GM12878 (cell line): ENCODE measurements at regions of chr12 and their contacts with region 1.

Region 1: DNA sequence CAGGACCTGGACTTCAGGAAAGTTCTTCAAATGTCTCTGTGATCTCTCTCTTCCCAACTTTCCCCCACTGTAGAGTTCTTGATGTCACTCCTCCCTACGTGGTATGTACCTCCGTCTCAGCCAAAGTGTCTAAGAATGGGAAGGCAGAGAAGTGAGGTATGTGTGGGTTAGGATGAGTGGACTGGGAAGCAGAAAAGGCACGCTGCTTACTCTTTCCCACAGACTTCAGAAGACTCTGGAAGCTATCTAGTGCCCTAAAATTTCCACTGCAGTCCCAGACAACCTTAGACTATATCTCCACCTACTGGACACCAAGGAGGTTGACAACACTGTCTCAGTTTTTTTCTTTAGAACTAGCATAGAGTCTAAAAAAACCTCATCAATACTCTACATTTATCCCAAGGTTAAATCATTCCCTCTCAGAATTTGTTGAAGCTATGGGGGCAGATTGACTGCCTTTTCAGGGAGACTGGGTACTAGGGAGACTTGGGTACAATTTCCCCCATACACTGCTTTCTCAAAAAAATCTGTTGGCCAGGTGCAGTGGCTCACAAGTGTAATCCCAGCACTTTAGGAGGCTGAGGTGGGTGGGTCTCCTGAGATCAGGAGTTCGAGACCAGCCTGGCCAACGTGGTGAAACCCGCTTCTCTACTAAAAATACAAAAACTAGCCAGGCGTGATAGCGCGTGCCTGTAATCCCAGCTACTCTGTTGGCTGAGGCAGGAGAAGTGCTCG is 20.6 kb upstream of the ITGA5 start:
- DNase-seq: no peak
- ATAC-seq: peak; percentile 72
- H3K4me3 ChIP-seq: no peak overlapping the region
- H3K27ac ChIP-seq: no peak overlapping the region
- H3K4me1 ChIP-seq: 0 out of 2 replicates have a peak, but pooled peaks cover 7% of the 10 kb centered on the region
- H3K27me3 ChIP-seq: no peaks in the 10 kb centered on the region; a peak in 1 of 4 replicates
- CTCF ChIP-seq: peak; percentile 76 to 85 (median 77)
- EP300 ChIP-seq: no peak
- POLR2A ChIP-seq: no peak
- RAD21 ChIP-seq: peak; percentile 92

Region 2: GRCh38 chr12:53696285-53696654 is 743.4 kb before region 1 on chr12:
- CTCF ChIA-PET with region 1: no interaction called
- POLR2A ChIA-PET with region 1: no interaction called
- RAD21 ChIA-PET with region 1: no interaction called
- SMC1A ChIA-PET with region 1: no interaction called
- in situ Hi-C with region 1: no loop called
- intact Hi-C with region 1: no loop called
- DNase-seq: peak; percentile 25
- ATAC-seq: peak; percentile 84
- H3K4me3 ChIP-seq: 0 out of 2 replicates have a peak overlapping the region, but pooled peaks have one; percentile 1
- H3K27ac ChIP-seq: no peak overlapping the region
- H3K4me1 ChIP-seq: peaks cover 5% of the 10 kb centered on the region; the same call in 1 of the 2 replicates
- H3K27me3 ChIP-seq: peaks cover 16 to 43% of the 10 kb centered on the region in 2 experiments
- CTCF ChIP-seq: no peak
- EP300 ChIP-seq: no peak
- POLR2A ChIP-seq: no peak
- RAD21 ChIP-seq: no peak

Region 3: GRCh38 chr12:54240971-54241588 is 198.6 kb before region 1 on chr12:
- CTCF ChIA-PET with region 1: interaction called, 15 read pairs
- POLR2A ChIA-PET with region 1: no interaction called
- RAD21 ChIA-PET with region 1: no interaction called
- SMC1A ChIA-PET with region 1: interaction called, 3 read pairs
- in situ Hi-C with region 1: no loop called
- intact Hi-C with region 1: no loop called
- DNase-seq: peak; percentile 80
- ATAC-seq: peak; percentile 95
- H3K4me3 ChIP-seq: no peak overlapping the region
- H3K27ac ChIP-seq: peak overlapping the region; percentile 45
- H3K4me1 ChIP-seq: peaks cover 16% of the 10 kb centered on the region
- H3K27me3 ChIP-seq: no peaks in the 10 kb centered on the region
- CTCF ChIP-seq: no peak
- EP300 ChIP-seq: 0 out of 4 replicates have a peak, but pooled peaks of 1 of the 2 experiments have one; percentile 39
- POLR2A ChIP-seq: no peak
- RAD21 ChIP-seq: no peak

Region 4: DNA sequence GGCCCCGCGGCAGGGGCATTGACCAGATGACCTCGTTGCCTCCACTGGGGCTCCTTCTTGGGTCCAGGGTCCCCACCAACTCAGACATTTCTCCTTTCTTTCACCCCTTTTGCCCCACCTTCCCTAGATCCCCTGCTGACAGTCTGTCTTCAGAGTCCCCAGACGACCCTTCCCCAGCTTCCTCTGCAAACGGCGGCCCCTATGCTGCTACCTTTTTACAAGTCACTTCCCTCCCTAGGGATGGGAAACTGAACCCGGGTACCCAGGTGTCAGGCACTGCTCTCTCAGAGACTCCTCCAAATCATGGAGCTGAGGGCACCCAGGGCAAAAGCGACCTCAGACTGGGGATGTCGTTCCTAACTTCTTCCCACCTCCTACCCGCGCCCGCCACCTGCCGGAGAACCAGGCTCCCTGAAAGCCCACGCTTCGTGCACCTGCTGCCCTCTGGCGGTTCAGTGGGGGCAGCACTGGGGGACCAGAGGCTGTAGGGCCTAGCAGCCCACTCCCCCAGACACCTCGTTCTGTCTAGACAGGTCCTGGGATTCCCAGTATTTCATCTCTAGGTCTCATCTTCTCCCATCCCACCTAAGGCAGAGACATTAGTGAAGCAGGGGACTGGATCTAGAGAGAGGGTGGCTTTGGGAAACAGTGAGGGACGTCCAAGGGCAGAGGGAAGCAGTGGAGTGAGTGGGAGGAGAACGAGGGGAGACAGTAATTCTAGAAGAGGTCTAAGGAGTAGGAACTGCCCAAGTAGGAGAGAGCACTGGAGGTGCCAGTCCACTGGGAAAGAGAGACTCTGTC is 60.1 kb before region 1 on chr12:
- CTCF ChIA-PET with region 1: interaction called, 43 read pairs
- POLR2A ChIA-PET with region 1: interaction called, 7 read pairs
- RAD21 ChIA-PET with region 1: interaction called, 9 read pairs
- SMC1A ChIA-PET with region 1: interaction called, 8 read pairs
- in situ Hi-C with region 1: no loop called
- intact Hi-C with region 1: no loop called
- DNase-seq: no peak
- ATAC-seq: peak; percentile 95
- H3K4me3 ChIP-seq: no peak overlapping the region
- H3K27ac ChIP-seq: no peak overlapping the region
- H3K4me1 ChIP-seq: peaks cover 4% of the 10 kb centered on the region
- H3K27me3 ChIP-seq: no peaks in the 10 kb centered on the region
- CTCF ChIP-seq: peak; percentile 100; a peak in 5 of 6 replicates
- EP300 ChIP-seq: no peak
- POLR2A ChIP-seq: no peak
- RAD21 ChIP-seq: peak; percentile 73

Region 5: DNA sequence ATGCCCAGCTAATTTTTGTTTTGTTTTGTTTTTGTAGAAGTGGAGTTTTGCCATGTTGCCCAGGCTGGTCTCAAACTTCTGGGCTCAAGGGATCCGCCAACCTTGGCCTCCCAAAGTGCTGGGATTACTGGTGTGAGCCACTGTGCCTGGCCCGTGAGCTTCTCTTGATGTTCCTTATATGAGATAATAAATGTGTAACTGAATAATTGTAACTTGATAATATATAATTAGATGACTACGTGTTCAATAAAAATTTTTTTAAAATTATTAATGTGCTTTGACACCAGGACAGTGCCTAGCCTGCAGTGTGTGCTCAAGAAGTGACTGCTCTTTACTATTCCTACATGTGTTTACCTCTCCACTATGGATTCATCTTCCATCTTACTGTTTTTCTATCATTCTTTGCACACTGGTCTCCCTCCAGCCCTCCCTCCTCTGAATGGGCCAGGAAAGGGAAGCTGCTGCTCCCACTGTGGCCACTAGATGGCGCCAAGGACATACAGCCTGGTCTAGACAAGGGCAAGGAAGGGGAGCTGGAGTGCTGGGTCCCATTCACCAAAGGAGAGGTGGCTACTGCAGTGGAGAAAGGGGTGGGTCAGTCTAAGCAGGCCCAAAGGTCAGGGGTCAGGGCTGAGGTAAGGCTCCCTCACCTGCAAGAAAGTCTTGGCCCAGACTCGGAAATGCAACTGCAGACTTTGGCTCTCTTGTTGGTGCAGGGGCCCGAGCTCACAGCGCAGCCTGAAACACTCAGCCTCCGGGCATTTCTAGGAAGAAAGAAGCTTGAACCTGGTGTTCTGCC is 40.5 kb before region 1 on chr12:
- CTCF ChIA-PET with region 1: interaction called, 1,071 read pairs
- POLR2A ChIA-PET with region 1: interaction called, 43 read pairs
- RAD21 ChIA-PET with region 1: interaction called, 296 read pairs
- SMC1A ChIA-PET with region 1: interaction called, 469 read pairs
- in situ Hi-C with region 1: loop called (anchors 5 kb)
- intact Hi-C with region 1: loop called (anchors 1 kb)
- DNase-seq: no peak
- ATAC-seq: peak; percentile 98
- H3K4me3 ChIP-seq: no peak overlapping the region
- H3K27ac ChIP-seq: no peak overlapping the region
- H3K4me1 ChIP-seq: no peaks in the 10 kb centered on the region
- H3K27me3 ChIP-seq: no peaks in the 10 kb centered on the region; a peak in 1 of 4 replicates
- CTCF ChIP-seq: peak; percentile 98 to 99 (median 99)
- EP300 ChIP-seq: no peak
- POLR2A ChIP-seq: no peak
- RAD21 ChIP-seq: peak; percentile 98

Region 6: GRCh38 chr12:54411391-54412241 is 28.1 kb before region 1 on chr12:
- CTCF ChIA-PET with region 1: interaction called, 1,071 read pairs
- POLR2A ChIA-PET with region 1: interaction called, 41 read pairs
- RAD21 ChIA-PET with region 1: interaction called, 34 read pairs
- SMC1A ChIA-PET with region 1: interaction called, 469 read pairs
- in situ Hi-C with region 1: no loop called
- intact Hi-C with region 1: no loop called
- DNase-seq: no peak
- ATAC-seq: peak; percentile 70
- H3K4me3 ChIP-seq: no peak overlapping the region
- H3K27ac ChIP-seq: no peak overlapping the region
- H3K4me1 ChIP-seq: peaks cover 16% of the 10 kb centered on the region
- H3K27me3 ChIP-seq: no peaks in the 10 kb centered on the region; a peak in 1 of 4 replicates
- CTCF ChIP-seq: no peak
- EP300 ChIP-seq: no peak
- POLR2A ChIP-seq: no peak
- RAD21 ChIP-seq: no peak

Region 7: GRCh38 chr12:54463034-54463433 is 23.3 kb after region 1 on chr12:
- CTCF ChIA-PET with region 1: interaction called, 19 read pairs
- POLR2A ChIA-PET with region 1: no interaction called
- RAD21 ChIA-PET with region 1: interaction called, 4 read pairs
- SMC1A ChIA-PET with region 1: interaction called, 4 read pairs
- in situ Hi-C with region 1: no loop called
- intact Hi-C with region 1: no loop called
- DNase-seq: no peak
- ATAC-seq: no peak
- H3K4me3 ChIP-seq: no peak overlapping the region
- H3K27ac ChIP-seq: no peak overlapping the region
- H3K4me1 ChIP-seq: peaks cover 3% of the 10 kb centered on the region; the same call in 1 of the 2 replicates
- H3K27me3 ChIP-seq: no peaks in the 10 kb centered on the region
- CTCF ChIP-seq: no peak
- EP300 ChIP-seq: no peak
- POLR2A ChIP-seq: no peak
- RAD21 ChIP-seq: no peak

Region 8: GRCh38 chr12:54680374-54680773 is 240.7 kb after region 1 on chr12:
- CTCF ChIA-PET with region 1: no interaction called
- POLR2A ChIA-PET with region 1: no interaction called
- RAD21 ChIA-PET with region 1: no interaction called
- SMC1A ChIA-PET with region 1: no interaction called
- in situ Hi-C with region 1: no loop called
- intact Hi-C with region 1: no loop called
- DNase-seq: no peak
- ATAC-seq: peak; percentile 94
- H3K4me3 ChIP-seq: no peak overlapping the region
- H3K27ac ChIP-seq: no peak overlapping the region
- H3K4me1 ChIP-seq: no peaks in the 10 kb centered on the region
- H3K27me3 ChIP-seq: no peaks in the 10 kb centered on the region; a peak in 2 of 4 replicates
- CTCF ChIP-seq: peak; percentile 45 to 75 (median 55)
- EP300 ChIP-seq: no peak
- POLR2A ChIP-seq: no peak
- RAD21 ChIP-seq: no peak